Calu3 (cell line): ENCODE measurements at regions of chr12 and their contacts with region 1.

Region 1: GRCh38 chr12:17763366-17763765 is 326.6 kb downstream of the RERGL start:
- DNase-seq: no peak
- H3K4me3 Mint-ChIP-seq: no peak overlapping the region
- H3K27ac Mint-ChIP-seq: no peak overlapping the region
- H3K4me1 Mint-ChIP-seq: no peaks in the 10 kb centered on the region
- H3K27me3 Mint-ChIP-seq: no peaks in the 10 kb centered on the region
- CTCF ChIP-seq: no peak

Region 2: GRCh38 chr12:17326649-17327048 is 436.7 kb before region 1 on chr12:
- CTCF ChIA-PET with region 1: no interaction called
- intact Hi-C with region 1: no loop called
- DNase-seq: no peak
- H3K4me3 Mint-ChIP-seq: no peak overlapping the region
- H3K27ac Mint-ChIP-seq: no peak overlapping the region
- H3K4me1 Mint-ChIP-seq: peaks cover 7% of the 10 kb centered on the region
- H3K27me3 Mint-ChIP-seq: no peaks in the 10 kb centered on the region
- CTCF ChIP-seq: no peak

Region 3: GRCh38 chr12:17853054-17853453 is 89.7 kb after region 1 on chr12:
- CTCF ChIA-PET with region 1: no interaction called
- intact Hi-C with region 1: loop called (anchors 5 kb)
- DNase-seq: no peak
- H3K4me3 Mint-ChIP-seq: no peak overlapping the region
- H3K27ac Mint-ChIP-seq: no peak overlapping the region
- H3K4me1 Mint-ChIP-seq: no peaks in the 10 kb centered on the region
- H3K27me3 Mint-ChIP-seq: no peaks in the 10 kb centered on the region
- CTCF ChIP-seq: no peak

Region 4: GRCh38 chr12:17999174-17999801 is 235.9 kb after region 1 on chr12:
- CTCF ChIA-PET with region 1: no interaction called
- intact Hi-C with region 1: no loop called
- DNase-seq: no peak
- H3K4me3 Mint-ChIP-seq: no peak overlapping the region
- H3K27ac Mint-ChIP-seq: no peak overlapping the region
- H3K4me1 Mint-ChIP-seq: no peaks in the 10 kb centered on the region
- H3K27me3 Mint-ChIP-seq: no peaks in the 10 kb centered on the region
- CTCF ChIP-seq: no peak